ENCODE measurements at regions of chr17 and their contacts with region 1.

Region 1: GRCh38 chr17:81222906-81223761 is at the start of gene CEP131:
- DNase-seq: peak; percentile 99 to 100 (median 99)
- ATAC-seq: peak; percentile 93
- H3K4me3 ChIP-seq: peak within 1 kb of the TSS; percentile 59 to 72
- H3K4me3 Mint-ChIP-seq: peak within 1 kb of the TSS; percentile 83
- H3K27ac ChIP-seq: peak within 1 kb of the TSS in 1 of 2 experiments; percentile 23
- H3K27ac Mint-ChIP-seq: peak within 1 kb of the TSS; percentile 45
- H3K4me1 ChIP-seq: peaks cover 20% of the 10 kb centered on the region
- H3K4me1 Mint-ChIP-seq: peaks cover 19% of the 10 kb centered on the region
- H3K27me3 ChIP-seq: no peaks in the 10 kb centered on the region
- H3K27me3 Mint-ChIP-seq: no peaks in the 10 kb centered on the region
- CTCF ChIP-seq: no peak
- total RNA-seq, gene CEP131: 8.5 to 10.3 TPM

Region 2: GRCh38 chr17:80454557-80455335 is 768.4 kb before region 1 on chr17:
- CTCF ChIA-PET with region 1: no interaction called
- POLR2A ChIA-PET with region 1: interaction called, 3 read pairs
- intact Hi-C with region 1: loop called in 1 of 2 experiments (anchors 10 kb)
- DNase-seq: peak; percentile 89 to 98 (median 95)
- ATAC-seq: peak; percentile 92
- H3K4me3 ChIP-seq: peak overlapping the region; percentile 82 to 92
- H3K4me3 Mint-ChIP-seq: peak overlapping the region; percentile 89
- H3K27ac ChIP-seq: peak overlapping the region; percentile 90 to 91
- H3K27ac Mint-ChIP-seq: peak overlapping the region; percentile 94
- H3K4me1 ChIP-seq: peaks cover 8% of the 10 kb centered on the region
- H3K4me1 Mint-ChIP-seq: peaks cover 16% of the 10 kb centered on the region
- H3K27me3 ChIP-seq: peaks cover 0 to 2% of the 10 kb centered on the region in 2 experiments
- H3K27me3 Mint-ChIP-seq: peaks cover 18% of the 10 kb centered on the region
- CTCF ChIP-seq: no peak

Region 3: DNA sequence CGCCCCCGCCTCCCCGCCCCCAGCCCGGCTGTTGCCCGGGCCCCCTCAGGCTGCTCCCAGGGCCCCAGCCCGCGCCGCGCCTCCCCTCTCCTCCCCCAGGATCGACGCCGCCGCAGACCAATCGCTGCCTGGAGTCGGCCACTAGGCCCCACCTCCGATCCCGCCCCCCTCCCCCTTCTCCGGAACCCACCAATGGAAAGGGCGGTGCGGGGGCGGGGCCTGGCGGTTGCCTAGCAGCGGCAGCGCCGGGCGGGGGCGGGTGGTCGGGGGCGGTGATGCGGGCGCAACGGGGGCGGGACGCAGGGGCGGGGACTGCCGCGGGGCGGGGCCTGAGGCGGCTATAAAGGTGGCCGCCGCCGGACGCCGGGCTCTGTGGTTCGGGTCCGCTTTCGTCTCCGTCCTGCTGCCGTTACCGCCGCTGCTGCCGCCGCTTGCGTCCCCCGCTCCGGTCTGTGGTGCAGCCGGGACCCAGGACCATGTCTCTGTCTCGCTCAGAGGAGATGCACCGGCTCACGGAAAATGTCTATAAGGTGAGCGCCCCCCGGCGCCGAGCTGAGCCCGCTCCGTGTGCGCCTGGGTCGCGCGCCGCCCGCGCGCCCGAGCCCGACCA is 188.2 kb before region 1 on chr17 and contains the start of gene BAIAP2:
- CTCF ChIA-PET with region 1: no interaction called
- POLR2A ChIA-PET with region 1: no interaction called
- intact Hi-C with region 1: loop called (anchors 1 kb)
- DNase-seq: peak; percentile 96 to 100 (median 98)
- ATAC-seq: peak; percentile 86
- H3K4me3 ChIP-seq: peak within 1 kb of the TSS; percentile 53 to 60
- H3K4me3 Mint-ChIP-seq: peak within 1 kb of the TSS; percentile 95
- H3K27ac ChIP-seq: peak within 1 kb of the TSS in 1 of 2 experiments; percentile 40
- H3K27ac Mint-ChIP-seq: peak within 1 kb of the TSS; percentile 93
- H3K4me1 ChIP-seq: peaks cover 11% of the 10 kb centered on the region
- H3K4me1 Mint-ChIP-seq: peaks cover 25% of the 10 kb centered on the region
- H3K27me3 ChIP-seq: no peaks in the 10 kb centered on the region
- H3K27me3 Mint-ChIP-seq: no peaks in the 10 kb centered on the region
- CTCF ChIP-seq: no peak
- total RNA-seq, gene BAIAP2: 8.5 to 9.1 TPM

Region 4: DNA sequence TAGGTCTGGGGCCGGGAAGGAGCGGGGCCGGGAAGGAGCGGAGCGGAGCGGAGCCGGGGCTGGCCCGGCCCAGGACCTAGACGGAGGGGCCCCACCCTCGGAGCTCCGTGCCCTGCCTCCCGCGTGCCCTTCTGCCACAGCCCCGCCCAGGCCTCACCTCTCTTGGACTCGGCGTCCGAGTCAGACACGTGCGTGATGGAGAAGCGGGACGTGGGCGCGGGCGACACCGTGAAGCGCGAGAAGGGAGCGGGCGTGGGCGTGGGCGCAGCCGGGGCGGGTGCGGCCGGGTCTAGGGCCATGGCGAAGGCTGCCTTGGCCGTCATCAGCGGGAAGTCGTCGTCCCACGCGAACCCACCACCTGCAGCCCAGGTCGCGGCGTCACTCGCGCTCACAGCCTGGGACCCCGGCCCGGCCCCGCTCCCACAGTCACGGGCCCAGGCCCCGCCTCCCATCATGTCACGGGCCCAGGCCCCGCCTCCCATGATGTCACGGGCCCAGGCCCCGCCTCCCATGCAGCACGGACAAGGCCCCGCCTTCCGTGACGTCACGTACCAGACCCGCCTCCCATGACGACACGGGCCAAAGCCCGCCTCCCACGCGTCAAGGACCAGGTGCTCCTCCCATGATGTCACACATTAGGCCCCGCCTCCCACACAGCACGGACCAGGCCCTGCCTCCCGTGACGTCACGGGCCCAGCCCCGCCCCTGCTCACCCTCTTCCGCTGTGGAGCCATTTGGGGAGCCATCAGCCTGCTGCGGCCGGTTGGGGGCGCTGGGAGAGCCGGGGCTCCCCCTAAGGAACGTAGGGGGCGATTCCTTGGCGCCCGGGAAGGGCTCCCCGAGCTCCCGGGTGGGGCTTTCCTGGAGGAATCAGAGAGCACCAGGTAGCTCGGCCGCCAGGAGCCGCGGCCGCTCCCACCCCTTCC is 103.6 kb before region 1 on chr17:
- CTCF ChIA-PET with region 1: no interaction called
- POLR2A ChIA-PET with region 1: no interaction called
- intact Hi-C with region 1: loop called in 1 of 2 experiments (anchors 1 kb)
- DNase-seq: peak; percentile 18 to 94 (median 73)
- ATAC-seq: peak; percentile 87
- H3K4me3 ChIP-seq: peak overlapping the region; percentile 8 to 23
- H3K4me3 Mint-ChIP-seq: peak overlapping the region; percentile 73
- H3K27ac ChIP-seq: no peak overlapping the region
- H3K27ac Mint-ChIP-seq: peak overlapping the region; percentile 91
- H3K4me1 ChIP-seq: peaks cover 6% of the 10 kb centered on the region
- H3K4me1 Mint-ChIP-seq: peaks cover 6% of the 10 kb centered on the region
- H3K27me3 ChIP-seq: no peaks in the 10 kb centered on the region
- H3K27me3 Mint-ChIP-seq: peaks cover 4% of the 10 kb centered on the region
- CTCF ChIP-seq: no peak

Region 5: DNA sequence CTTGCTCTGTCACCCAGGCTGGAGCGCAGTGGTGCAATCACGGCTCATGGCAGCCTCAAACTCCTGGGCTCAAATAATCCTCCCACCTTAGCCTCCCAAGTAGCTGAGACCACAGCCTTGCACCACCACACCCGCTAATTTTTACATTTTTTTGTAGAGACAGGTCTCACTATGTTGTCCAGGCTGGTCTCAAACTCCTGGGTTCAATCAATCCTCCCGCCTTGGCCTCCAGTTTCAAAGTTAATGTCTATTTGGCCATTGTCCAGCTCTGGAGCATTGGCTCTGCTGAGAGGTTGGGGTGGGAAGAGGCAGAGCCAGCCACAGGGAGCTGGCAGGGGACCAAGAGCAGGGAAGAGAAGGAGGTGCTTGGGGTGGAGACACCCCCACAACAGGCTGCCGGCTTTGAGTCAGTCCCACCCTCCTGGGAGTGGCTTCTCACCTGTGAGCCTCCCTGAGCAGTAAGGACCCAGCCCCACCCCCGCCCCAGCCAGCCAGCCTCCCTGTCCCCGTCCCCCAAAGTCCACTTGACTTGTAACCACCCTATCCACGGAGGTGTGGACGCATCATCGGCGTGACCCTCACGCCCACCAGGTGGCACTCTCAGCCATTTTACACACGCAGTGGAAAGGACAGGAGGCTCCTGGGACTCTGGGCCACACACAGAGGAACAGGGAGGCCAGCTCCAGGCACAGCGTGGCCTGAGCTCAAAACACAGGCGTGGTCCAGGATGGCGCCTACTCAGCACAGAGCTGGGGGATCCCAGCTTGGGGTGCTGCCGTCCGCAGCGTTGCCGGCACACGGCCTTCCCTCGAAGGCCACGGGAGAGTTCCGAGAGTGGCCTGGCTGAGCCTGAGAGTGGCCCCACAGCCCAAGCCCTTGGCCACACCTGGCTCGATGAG is 80.6 kb before region 1 on chr17:
- CTCF ChIA-PET with region 1: no interaction called
- POLR2A ChIA-PET with region 1: no interaction called
- intact Hi-C with region 1: no loop called
- DNase-seq: peak; percentile 44 to 73 (median 57)
- ATAC-seq: peak; percentile 72
- H3K4me3 ChIP-seq: no peak overlapping the region
- H3K4me3 Mint-ChIP-seq: no peak overlapping the region
- H3K27ac ChIP-seq: no peak overlapping the region
- H3K27ac Mint-ChIP-seq: no peak overlapping the region
- H3K4me1 ChIP-seq: no peaks in the 10 kb centered on the region
- H3K4me1 Mint-ChIP-seq: no peaks in the 10 kb centered on the region
- H3K27me3 ChIP-seq: peaks cover 0 to 4% of the 10 kb centered on the region in 2 experiments
- H3K27me3 Mint-ChIP-seq: peaks cover 4% of the 10 kb centered on the region
- CTCF ChIP-seq: peak; percentile 47

Region 6: DNA sequence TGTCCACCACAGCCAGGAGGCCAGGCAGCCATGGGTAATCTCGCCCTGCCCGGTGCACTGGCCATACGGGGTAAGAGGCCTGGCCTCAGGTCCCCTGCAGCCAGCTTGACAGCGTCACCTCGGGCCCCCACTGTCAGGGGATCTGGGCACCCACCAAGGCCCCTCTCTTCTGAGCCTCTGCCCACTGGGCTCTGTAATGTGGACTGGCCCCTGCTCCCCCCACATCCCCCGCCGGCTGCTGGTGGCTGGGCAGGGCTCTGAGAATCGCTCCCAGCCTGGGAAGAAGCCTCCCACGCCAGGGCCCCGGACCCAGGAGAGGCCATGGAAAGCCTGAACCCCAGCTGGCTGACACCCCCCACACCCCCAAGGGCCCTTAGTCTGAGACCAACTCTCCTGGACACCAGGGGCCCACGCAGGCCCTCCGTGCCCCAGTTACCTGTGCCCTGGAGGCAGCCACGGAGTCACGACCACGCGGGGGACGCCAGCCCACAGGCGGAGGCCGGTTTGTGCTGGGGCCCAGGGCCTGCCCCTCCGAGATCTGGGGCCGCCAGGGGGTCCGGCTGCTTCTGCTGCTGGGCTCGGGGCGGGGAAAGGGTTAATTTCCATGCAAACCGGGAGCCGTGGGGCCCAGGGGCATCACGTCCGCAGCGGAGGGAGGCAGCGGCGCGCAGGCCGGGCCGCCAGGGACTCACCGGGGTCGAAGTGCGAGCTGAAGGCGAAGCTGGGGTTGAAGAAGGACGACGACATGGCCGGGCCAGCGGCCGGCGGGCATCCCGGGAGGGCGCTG is 57.7 kb before region 1 on chr17 and contains the start of gene PVALEF:
- CTCF ChIA-PET with region 1: no interaction called
- POLR2A ChIA-PET with region 1: no interaction called
- intact Hi-C with region 1: no loop called
- DNase-seq: peak in 1 of 9 experiments; percentile 15
- ATAC-seq: peak; percentile 11
- H3K4me3 ChIP-seq: no peak within 1 kb of the TSS
- H3K4me3 Mint-ChIP-seq: peak within 1 kb of the TSS; percentile 57
- H3K27ac ChIP-seq: no peak within 1 kb of the TSS
- H3K27ac Mint-ChIP-seq: no peak within 1 kb of the TSS
- H3K4me1 ChIP-seq: no peaks in the 10 kb centered on the region
- H3K4me1 Mint-ChIP-seq: peaks cover 1% of the 10 kb centered on the region
- H3K27me3 ChIP-seq: peaks cover 0 to 14% of the 10 kb centered on the region in 2 experiments
- H3K27me3 Mint-ChIP-seq: peaks cover 8% of the 10 kb centered on the region
- CTCF ChIP-seq: no peak
- total RNA-seq, gene PVALEF: not detected

Region 7: GRCh38 chr17:81200695-81201580 is 22.2 kb before region 1 on chr17:
- CTCF ChIA-PET with region 1: no interaction called
- POLR2A ChIA-PET with region 1: no interaction called
- intact Hi-C with region 1: no loop called
- DNase-seq: peak in 3 of 9 experiments; percentile 18 to 38 (median 25)
- ATAC-seq: peak; percentile 65
- H3K4me3 ChIP-seq: no peak overlapping the region
- H3K4me3 Mint-ChIP-seq: no peak overlapping the region
- H3K27ac ChIP-seq: no peak overlapping the region
- H3K27ac Mint-ChIP-seq: no peak overlapping the region
- H3K4me1 ChIP-seq: no peaks in the 10 kb centered on the region
- H3K4me1 Mint-ChIP-seq: no peaks in the 10 kb centered on the region
- H3K27me3 ChIP-seq: no peaks in the 10 kb centered on the region
- H3K27me3 Mint-ChIP-seq: no peaks in the 10 kb centered on the region
- CTCF ChIP-seq: no peak

Region 8: GRCh38 chr17:81294856-81295680 is 71.9 kb after region 1 on chr17 and contains the start of gene SLC38A10:
- CTCF ChIA-PET with region 1: interaction called, 3 read pairs
- POLR2A ChIA-PET with region 1: no interaction called
- intact Hi-C with region 1: loop called in 1 of 2 experiments (anchors 1 kb)
- DNase-seq: peak; percentile 78 to 94 (median 91)
- ATAC-seq: peak; percentile 83
- H3K4me3 ChIP-seq: peak within 1 kb of the TSS; percentile 77 to 98
- H3K4me3 Mint-ChIP-seq: peak within 1 kb of the TSS; percentile 94
- H3K27ac ChIP-seq: peak within 1 kb of the TSS; percentile 85 to 90
- H3K27ac Mint-ChIP-seq: peak within 1 kb of the TSS; percentile 96
- H3K4me1 ChIP-seq: peaks cover 24% of the 10 kb centered on the region
- H3K4me1 Mint-ChIP-seq: peaks cover 42% of the 10 kb centered on the region
- H3K27me3 ChIP-seq: no peaks in the 10 kb centered on the region
- H3K27me3 Mint-ChIP-seq: no peaks in the 10 kb centered on the region
- CTCF ChIP-seq: no peak
- total RNA-seq, gene SLC38A10: 16.1 to 17.4 TPM

Region 9: DNA sequence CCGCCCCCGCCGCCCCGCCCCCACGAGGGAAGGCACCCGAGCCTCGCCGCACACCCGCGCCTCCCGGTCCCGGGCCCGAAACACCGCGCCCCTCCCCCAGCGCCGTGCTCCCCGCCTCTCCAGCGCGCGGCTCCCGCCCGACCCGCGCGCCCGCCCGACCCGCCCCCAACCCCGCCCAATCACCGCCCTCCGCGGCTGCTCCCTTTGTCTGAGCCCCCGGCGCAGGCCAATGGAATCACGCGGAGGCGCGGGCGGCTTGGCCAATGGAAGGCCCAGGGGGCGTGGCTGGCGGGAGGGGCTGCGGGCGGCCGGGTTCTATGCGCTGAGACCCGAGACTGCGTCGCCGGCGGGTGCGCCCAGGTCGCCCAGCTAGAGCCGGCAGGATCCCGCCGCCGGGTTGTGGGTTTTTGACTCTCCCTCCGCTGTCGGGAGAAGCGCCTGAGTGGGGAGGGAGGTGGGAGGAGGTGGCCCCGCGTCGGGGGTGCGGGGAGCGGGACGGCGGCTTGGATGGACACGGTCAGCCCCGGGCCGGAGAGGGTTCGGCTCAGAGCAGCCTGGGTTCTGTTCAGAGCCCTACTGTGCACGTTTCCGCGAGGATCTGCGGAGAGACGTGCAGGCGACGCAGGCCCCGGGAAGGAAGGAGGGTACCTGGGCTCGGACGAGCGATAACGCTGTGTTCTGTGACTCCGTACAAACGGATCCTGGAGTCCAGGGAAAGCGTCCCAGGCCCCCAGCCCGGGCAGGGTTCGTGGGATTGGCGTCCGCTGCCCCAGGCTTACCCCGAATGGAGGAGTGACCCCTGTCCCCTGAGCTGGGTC is 123.2 kb after region 1 on chr17:
- CTCF ChIA-PET with region 1: no interaction called
- POLR2A ChIA-PET with region 1: no interaction called
- intact Hi-C with region 1: loop called (anchors 1 to 2 kb)
- DNase-seq: peak; percentile 81 to 96 (median 94)
- ATAC-seq: peak; percentile 96
- H3K4me3 ChIP-seq: peak overlapping the region; percentile 43 to 47
- H3K4me3 Mint-ChIP-seq: peak overlapping the region; percentile 63
- H3K27ac ChIP-seq: no peak overlapping the region
- H3K27ac Mint-ChIP-seq: no peak overlapping the region
- H3K4me1 ChIP-seq: peaks cover 34% of the 10 kb centered on the region
- H3K4me1 Mint-ChIP-seq: peaks cover 21% of the 10 kb centered on the region
- H3K27me3 ChIP-seq: peaks cover 34 to 37% of the 10 kb centered on the region in 2 experiments
- H3K27me3 Mint-ChIP-seq: peaks cover 24% of the 10 kb centered on the region
- CTCF ChIP-seq: no peak

Region 10: DNA sequence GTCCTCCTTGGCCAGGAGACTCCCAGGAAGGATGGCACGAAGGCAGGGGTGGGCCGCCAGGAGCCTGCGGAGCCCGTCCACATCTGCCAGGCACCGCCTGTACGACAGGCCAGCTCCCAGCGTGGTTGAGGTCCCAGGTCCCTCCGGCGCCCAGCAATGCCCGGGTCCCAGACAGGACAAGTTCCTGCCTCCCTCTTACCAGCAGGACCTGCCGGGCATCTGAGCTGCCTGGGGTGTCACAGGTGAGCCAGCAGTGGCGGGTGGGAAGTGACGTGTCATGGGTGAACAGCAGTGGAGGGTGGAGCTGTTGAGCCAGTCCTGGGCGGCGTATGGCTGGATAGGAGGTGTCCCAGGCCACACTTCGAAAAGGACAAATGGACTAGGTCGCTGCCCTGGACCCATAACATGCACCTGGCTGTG is 156.4 kb after region 1 on chr17:
- CTCF ChIA-PET with region 1: no interaction called
- POLR2A ChIA-PET with region 1: no interaction called
- intact Hi-C with region 1: no loop called
- DNase-seq: peak in 1 of 9 experiments; percentile 6
- ATAC-seq: no peak
- H3K4me3 ChIP-seq: no peak overlapping the region
- H3K4me3 Mint-ChIP-seq: no peak overlapping the region
- H3K27ac ChIP-seq: no peak overlapping the region
- H3K27ac Mint-ChIP-seq: no peak overlapping the region
- H3K4me1 ChIP-seq: no peaks in the 10 kb centered on the region
- H3K4me1 Mint-ChIP-seq: no peaks in the 10 kb centered on the region
- H3K27me3 ChIP-seq: no peaks in the 10 kb centered on the region
- H3K27me3 Mint-ChIP-seq: peaks cover 6% of the 10 kb centered on the region
- CTCF ChIP-seq: no peak

Region 11: DNA sequence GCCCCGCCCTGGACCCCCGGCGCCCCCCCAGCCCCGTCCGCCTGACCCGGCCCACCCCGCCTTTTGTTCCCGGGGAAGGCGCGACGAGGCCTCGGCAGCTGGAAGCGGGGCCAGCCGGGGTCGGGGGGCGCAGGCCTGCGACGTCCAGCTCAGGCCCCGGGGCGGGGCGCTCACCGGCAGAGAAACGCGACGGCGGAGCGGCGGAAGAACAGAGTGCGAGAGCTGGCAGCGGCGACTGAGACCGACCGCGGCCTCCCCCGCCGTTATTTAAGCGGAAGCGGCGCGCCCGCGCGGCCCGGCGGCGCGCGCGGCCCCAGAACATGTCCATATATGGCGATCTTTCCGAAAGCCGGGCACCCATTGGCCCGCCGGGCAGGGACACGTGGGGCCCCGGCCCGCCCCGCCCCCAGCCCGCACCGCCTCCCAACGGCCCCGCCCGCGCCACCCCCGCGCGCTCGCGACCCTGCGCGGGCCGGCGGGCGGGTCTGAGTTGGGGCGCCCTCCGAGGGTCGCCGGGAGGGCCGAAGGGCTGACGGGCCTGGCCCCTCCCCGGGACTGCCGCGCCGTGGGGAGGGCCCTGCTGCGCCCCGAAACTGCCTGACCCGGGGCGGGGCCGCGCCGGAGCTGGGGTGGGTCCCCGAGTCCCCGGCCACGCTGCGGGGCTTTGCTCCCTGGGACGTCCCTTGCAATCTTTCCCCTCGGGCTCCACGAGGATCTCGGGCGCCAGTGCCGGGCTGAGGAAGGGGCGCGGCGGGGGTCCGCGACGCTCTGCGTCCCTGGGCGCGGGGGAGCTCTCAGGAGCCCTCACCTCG is 289.6 kb after region 1 on chr17 and contains the start of gene ACTG1:
- CTCF ChIA-PET with region 1: no interaction called
- POLR2A ChIA-PET with region 1: no interaction called
- intact Hi-C with region 1: loop called (anchors 1 kb)
- DNase-seq: peak; percentile 87 to 97 (median 92)
- ATAC-seq: peak; percentile 60
- H3K4me3 ChIP-seq: peak within 1 kb of the TSS; percentile 84 to 93
- H3K4me3 Mint-ChIP-seq: peak within 1 kb of the TSS; percentile 98
- H3K27ac ChIP-seq: peak within 1 kb of the TSS; percentile 56 to 93
- H3K27ac Mint-ChIP-seq: peak within 1 kb of the TSS; percentile 98
- H3K4me1 ChIP-seq: peaks cover 49% of the 10 kb centered on the region
- H3K4me1 Mint-ChIP-seq: peaks cover 57% of the 10 kb centered on the region
- H3K27me3 ChIP-seq: no peaks in the 10 kb centered on the region
- H3K27me3 Mint-ChIP-seq: no peaks in the 10 kb centered on the region
- CTCF ChIP-seq: no peak
- total RNA-seq, gene ACTG1: 1,370 to 1,375 TPM

Measured in CD8-positive, alpha-beta T cell (primary cell).